ENCODE measurements at regions of chr1 and their contacts with region 1.

Region 1: DNA sequence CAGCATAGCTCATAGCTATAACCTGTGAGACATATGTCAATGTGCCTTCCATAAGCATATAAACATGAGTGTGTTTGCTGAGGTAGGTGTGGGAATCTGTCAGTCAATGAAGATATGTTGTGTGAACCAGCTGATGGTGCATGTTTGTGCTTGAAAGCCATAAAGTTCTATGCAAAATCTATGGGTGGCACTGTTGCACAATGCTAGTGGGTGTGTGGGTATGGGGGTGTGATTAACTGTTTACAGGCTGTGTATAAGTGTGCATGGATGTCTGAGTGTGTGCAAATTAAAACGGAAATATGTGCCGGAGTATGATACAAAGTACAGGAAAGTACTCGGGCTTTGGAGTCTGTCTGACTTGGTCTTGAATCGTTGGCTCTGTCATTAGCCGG is 1.0 kb upstream of the ATP2B4 start:
- DNase-seq: peak in 2 of 4 donors; percentile 72 to 81
- ATAC-seq: peak; percentile 45
- H3K4me3 ChIP-seq: no peak overlapping the region
- H3K27ac ChIP-seq: peak overlapping the region; percentile 73 to 95
- H3K4me1 ChIP-seq: peaks cover 21 to 37% of the 10 kb centered on the region in 2 donors
- H3K27me3 ChIP-seq: no peaks in the 10 kb centered on the region
- CTCF ChIP-seq: peak in 1 of 2 donors; percentile 24

Region 2: GRCh38 chr1:203428981-203429599 is 196.5 kb before region 1 on chr1:
- intact Hi-C with region 1: no loop called
- DNase-seq: peak in 1 of 4 donors; percentile 27
- ATAC-seq: peak; percentile 81
- H3K4me3 ChIP-seq: no peak overlapping the region
- H3K27ac ChIP-seq: no peak overlapping the region
- H3K4me1 ChIP-seq: no peaks in the 10 kb centered on the region
- H3K27me3 ChIP-seq: peaks cover 0 to 39% of the 10 kb centered on the region in 2 donors
- CTCF ChIP-seq: no peak

Region 3: GRCh38 chr1:203504397-203505250 is 121.0 kb before region 1 on chr1:
- intact Hi-C with region 1: loop called in 1 of 2 experiments (anchors 10 kb)
- DNase-seq: peak in 3 of 4 donors; percentile 72 to 83 (median 75)
- ATAC-seq: peak; percentile 92
- H3K4me3 ChIP-seq: no peak overlapping the region
- H3K27ac ChIP-seq: no peak overlapping the region
- H3K4me1 ChIP-seq: peaks cover 10 to 31% of the 10 kb centered on the region in 2 donors
- H3K27me3 ChIP-seq: peaks cover 0 to 10% of the 10 kb centered on the region in 2 donors
- CTCF ChIP-seq: peak; percentile 78 to 96

Region 4: GRCh38 chr1:203692565-203693470 is 67.2 kb after region 1 on chr1:
- intact Hi-C with region 1: loop called in 1 of 2 experiments (anchors 5 kb)
- DNase-seq: peak; percentile 81 to 93 (median 84)
- ATAC-seq: peak; percentile 90
- H3K4me3 ChIP-seq: no peak overlapping the region
- H3K27ac ChIP-seq: peak overlapping the region; percentile 81
- H3K4me1 ChIP-seq: peaks cover 24 to 58% of the 10 kb centered on the region in 2 donors
- H3K27me3 ChIP-seq: no peaks in the 10 kb centered on the region
- CTCF ChIP-seq: peak in 1 of 2 donors; percentile 13